ENCODE measurements at regions of chr11 and their contacts with region 1.

Region 1: GRCh38 chr11:108121274-108122155 is at the start of gene ACAT1:
- H3K4me3 Mint-ChIP-seq: peak within 1 kb of the TSS; percentile 79
- H3K27ac Mint-ChIP-seq: peak within 1 kb of the TSS; percentile 63
- H3K4me1 Mint-ChIP-seq: peaks cover 46% of the 10 kb centered on the region
- H3K27me3 Mint-ChIP-seq: no peaks in the 10 kb centered on the region

Region 2: DNA sequence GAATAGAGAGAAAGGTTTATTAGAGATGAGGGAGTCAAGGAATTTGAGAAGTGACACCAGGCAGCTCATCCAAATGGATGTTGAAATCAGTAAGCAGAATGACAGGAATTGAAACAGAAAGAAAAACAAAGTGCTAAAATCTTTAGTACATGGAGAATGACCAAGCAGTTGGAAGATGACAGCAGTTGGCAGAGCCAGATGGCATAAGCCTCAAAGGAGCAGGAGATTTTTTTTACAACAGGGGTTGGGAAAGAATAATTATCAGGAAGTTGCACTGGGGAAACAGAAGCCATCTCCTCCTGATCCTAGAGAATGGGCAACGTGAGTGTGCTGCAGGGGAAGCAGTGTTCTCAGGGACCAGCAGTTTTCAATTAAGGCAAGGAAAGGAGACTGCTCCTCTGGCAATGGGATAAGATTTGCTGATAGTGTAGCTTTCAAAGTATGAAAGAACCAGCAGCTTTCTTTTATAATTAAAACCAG is 164.4 kb before region 1 on chr11:
- intact Hi-C with region 1: no loop called
- H3K4me3 Mint-ChIP-seq: peak overlapping the region; percentile 15
- H3K27ac Mint-ChIP-seq: peak overlapping the region; percentile 66
- H3K4me1 Mint-ChIP-seq: peaks cover 39% of the 10 kb centered on the region
- H3K27me3 Mint-ChIP-seq: no peaks in the 10 kb centered on the region

Region 3: GRCh38 chr11:108664730-108665525 is 543.4 kb after region 1 on chr11 and contains the start of gene DDX10:
- intact Hi-C with region 1: loop called (anchors 5 kb)
- H3K4me3 Mint-ChIP-seq: peak within 1 kb of the TSS; percentile 100
- H3K27ac Mint-ChIP-seq: peak within 1 kb of the TSS; percentile 86
- H3K4me1 Mint-ChIP-seq: peaks cover 45% of the 10 kb centered on the region
- H3K27me3 Mint-ChIP-seq: no peaks in the 10 kb centered on the region

Measured in dendritic cell treated with granulocyte-macrophage colony-stimulating factor and Interleukin-4, amounts not matched to agents 40 ng/mL and 50 ng/mL, for 4 days (primary cell).